ENCODE measurements at regions of chr12 and their contacts with region 1.

Region 1: DNA sequence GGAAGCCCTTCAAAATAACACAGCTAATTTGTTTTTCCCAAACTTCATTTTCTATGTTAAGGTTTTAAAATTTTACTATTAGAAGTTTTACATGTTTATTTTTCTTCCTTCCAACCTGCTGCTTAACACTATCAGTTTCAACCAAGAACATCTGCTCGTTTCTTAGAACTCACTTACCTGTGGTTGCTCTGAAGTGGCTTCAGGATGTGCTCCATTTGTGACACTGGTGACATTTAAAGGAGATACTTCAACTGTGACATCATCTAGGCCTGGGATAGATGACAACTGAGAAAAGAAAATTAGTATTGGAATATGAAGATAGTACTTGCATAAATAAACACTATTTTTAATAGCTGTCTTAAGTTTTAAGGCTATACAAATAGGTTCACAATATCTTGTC is 17.9 kb downstream of the WASHC3 start:
- DNase-seq: peak; percentile 7
- H3K4me3 ChIP-seq: no peak overlapping the region
- H3K27ac ChIP-seq: no peak overlapping the region
- H3K4me1 ChIP-seq: peaks cover 4% of the 10 kb centered on the region
- CTCF ChIP-seq: no peak

Region 2: GRCh38 chr12:101857043-101857558 is 186.8 kb before region 1 on chr12:
- CTCF ChIA-PET with region 1: no interaction called
- POLR2A ChIA-PET with region 1: no interaction called
- intact Hi-C with region 1: no loop called
- DNase-seq: no peak
- H3K4me3 ChIP-seq: no peak overlapping the region
- H3K27ac ChIP-seq: no peak overlapping the region
- H3K4me1 ChIP-seq: peaks cover 36% of the 10 kb centered on the region
- CTCF ChIP-seq: no peak

Region 3: DNA sequence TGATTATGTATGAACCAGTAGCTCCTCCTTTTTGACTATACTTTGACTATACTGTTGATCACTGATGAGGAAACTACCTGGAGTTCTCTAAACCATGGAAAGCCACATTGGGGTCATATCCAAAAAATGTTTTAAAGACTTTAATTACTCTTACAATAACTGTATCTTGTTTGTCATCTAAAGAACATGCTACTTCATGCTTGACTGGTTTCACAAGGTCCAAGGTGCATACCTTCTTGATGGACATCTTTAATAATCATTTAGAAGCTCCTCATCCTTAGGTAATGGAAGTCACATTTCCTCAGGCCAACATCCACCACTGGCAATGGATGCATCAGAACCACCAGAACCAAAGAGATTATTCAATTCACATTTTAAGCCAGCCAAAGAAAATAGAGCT is 12.1 kb before region 1 on chr12:
- CTCF ChIA-PET with region 1: interaction called, 3 read pairs
- POLR2A ChIA-PET with region 1: interaction called, 10 read pairs
- intact Hi-C with region 1: no loop called
- DNase-seq: no peak
- H3K4me3 ChIP-seq: no peak overlapping the region
- H3K27ac ChIP-seq: no peak overlapping the region
- H3K4me1 ChIP-seq: no peaks in the 10 kb centered on the region
- CTCF ChIP-seq: no peak

Region 4: DNA sequence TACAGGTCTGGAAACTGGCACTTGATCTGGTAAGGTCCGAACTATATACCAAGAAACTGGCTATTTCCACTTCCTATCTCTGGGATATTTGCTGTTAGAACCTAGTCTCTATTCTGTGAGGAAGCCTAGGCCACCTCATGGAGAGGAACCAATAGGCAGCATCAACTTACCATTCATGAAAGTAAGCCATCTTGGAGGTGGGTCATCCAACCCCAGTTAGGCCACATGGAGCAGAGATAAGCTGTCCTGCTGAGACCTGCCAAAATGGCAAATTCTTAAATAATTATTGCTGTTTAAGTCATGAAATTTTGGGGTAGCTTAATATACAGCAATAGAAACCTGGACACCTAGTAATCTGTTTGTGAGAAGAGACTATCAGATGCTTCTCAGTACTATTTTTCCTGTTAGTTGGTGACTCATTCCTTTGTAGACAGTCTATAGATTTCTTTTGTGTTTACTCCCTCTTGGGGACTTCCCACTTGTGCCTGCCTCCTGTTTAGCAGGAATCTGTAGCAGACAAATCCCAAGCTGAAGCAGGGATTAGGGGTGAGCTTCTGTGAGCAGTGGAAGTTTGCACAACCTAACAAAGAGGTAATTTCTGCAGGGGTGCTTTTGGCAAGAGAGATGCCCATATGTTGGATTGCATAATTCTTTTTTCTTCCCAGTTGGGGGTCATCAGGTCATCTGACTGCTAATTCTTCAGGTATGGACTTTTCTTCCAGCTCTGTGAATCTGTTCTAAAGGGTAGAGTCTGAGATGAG is 299.6 kb after region 1 on chr12:
- CTCF ChIA-PET with region 1: no interaction called
- POLR2A ChIA-PET with region 1: no interaction called
- intact Hi-C with region 1: no loop called
- DNase-seq: no peak
- H3K4me3 ChIP-seq: no peak overlapping the region
- H3K27ac ChIP-seq: no peak overlapping the region
- H3K4me1 ChIP-seq: no peaks in the 10 kb centered on the region
- CTCF ChIP-seq: no peak

Measured in OCI-LY7 (cell line).